Heart left ventricle (tissue), 16 donors: ENCODE measurements at regions of chr14 and their contacts with region 1.

Region 1: GRCh38 chr14:62126879-62127478 is 364.8 kb downstream of the SNAPC1 start:
- DNase-seq: no peak
- ATAC-seq: peak in 3 of 4 donors; percentile 47 to 69 (median 54)
- H3K4me3 ChIP-seq: no peak overlapping the region
- H3K27ac ChIP-seq: no peak overlapping the region
- H3K4me1 ChIP-seq: no peaks in the 10 kb centered on the region
- H3K27me3 ChIP-seq: peaks cover 0 to 82% (median 19%) of the 10 kb centered on the region in 9 donors
- CTCF ChIP-seq: peak; percentile 50 to 77 (median 70)
- POLR2A ChIP-seq: no peak

Region 2: GRCh38 chr14:61269321-61270083 is 857.5 kb before region 1 on chr14:
- intact Hi-C with region 1: loop called in 1 of 10 experiments (anchors 5 kb)
- DNase-seq: peak; percentile 45 to 77 (median 61)
- ATAC-seq: peak; percentile 48 to 88 (median 73)
- H3K4me3 ChIP-seq: peak overlapping the region in 10 of 12 donors; percentile 16 to 46 (median 34)
- H3K27ac ChIP-seq: no peak overlapping the region
- H3K4me1 ChIP-seq: peaks cover 0 to 8% (median 0%) of the 10 kb centered on the region in 12 donors
- H3K27me3 ChIP-seq: peaks cover 0 to 37% (median 5%) of the 10 kb centered on the region in 9 donors
- CTCF ChIP-seq: peak; percentile 63 to 81 (median 76)
- POLR2A ChIP-seq: no peak

Region 3: GRCh38 chr14:61296719-61297502 is 830.1 kb before region 1 on chr14:
- intact Hi-C with region 1: loop called in 5 of 10 experiments (anchors 10 kb)
- DNase-seq: no peak
- ATAC-seq: peak in 1 of 4 donors; percentile 57
- H3K4me3 ChIP-seq: no peak overlapping the region
- H3K27ac ChIP-seq: no peak overlapping the region
- H3K4me1 ChIP-seq: peaks cover 0 to 19% (median 0%) of the 10 kb centered on the region in 12 donors
- H3K27me3 ChIP-seq: no peaks in the 10 kb centered on the region
- CTCF ChIP-seq: peak; percentile 51 to 77 (median 68)
- POLR2A ChIP-seq: no peak

Region 4: GRCh38 chr14:61456720-61457119 is 670.3 kb before region 1 on chr14:
- intact Hi-C with region 1: loop called in 8 of 10 experiments (anchors 5 to 10 kb)
- DNase-seq: peak in 4 of 5 donors; percentile 81 to 90 (median 85)
- ATAC-seq: peak in 3 of 4 donors; percentile 76 to 83 (median 78)
- H3K4me3 ChIP-seq: no peak overlapping the region
- H3K27ac ChIP-seq: no peak overlapping the region
- H3K4me1 ChIP-seq: peaks cover 0 to 38% (median 13%) of the 10 kb centered on the region in 12 donors
- H3K27me3 ChIP-seq: no peaks in the 10 kb centered on the region
- CTCF ChIP-seq: peak; percentile 78 to 94 (median 88)
- POLR2A ChIP-seq: no peak

Region 5: DNA sequence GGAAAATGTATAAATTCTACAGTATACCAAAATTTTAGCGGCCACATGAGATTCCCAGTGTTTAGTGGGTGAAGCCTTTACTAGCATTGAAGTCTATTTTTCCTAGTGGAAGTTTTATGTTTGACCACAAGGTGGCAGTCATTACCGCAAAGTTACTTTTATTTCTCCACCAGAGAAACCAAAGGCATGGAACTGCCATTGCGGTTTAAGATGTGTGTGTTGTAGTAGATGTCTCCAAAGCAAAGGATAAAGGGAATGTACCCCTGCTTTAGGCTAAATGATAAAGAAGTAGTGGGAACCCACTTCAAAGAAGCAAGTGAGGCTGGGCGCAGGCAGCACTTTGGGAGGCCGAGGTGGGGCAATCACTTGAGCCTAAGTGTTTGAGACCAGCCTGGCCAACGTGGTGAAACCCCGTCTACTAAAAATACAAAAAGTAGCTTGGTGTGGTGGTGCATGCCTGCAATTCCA is 665.1 kb before region 1 on chr14:
- intact Hi-C with region 1: loop called in 7 of 10 experiments (anchors 5 to 10 kb)
- DNase-seq: no peak
- ATAC-seq: peak; percentile 27 to 49 (median 38)
- H3K4me3 ChIP-seq: no peak overlapping the region
- H3K27ac ChIP-seq: peak overlapping the region in 4 of 12 donors; percentile 32 to 65 (median 40)
- H3K4me1 ChIP-seq: peaks cover 0 to 36% (median 27%) of the 10 kb centered on the region in 12 donors
- H3K27me3 ChIP-seq: no peaks in the 10 kb centered on the region
- CTCF ChIP-seq: peak; percentile 65 to 90 (median 81)
- POLR2A ChIP-seq: no peak

Region 6: DNA sequence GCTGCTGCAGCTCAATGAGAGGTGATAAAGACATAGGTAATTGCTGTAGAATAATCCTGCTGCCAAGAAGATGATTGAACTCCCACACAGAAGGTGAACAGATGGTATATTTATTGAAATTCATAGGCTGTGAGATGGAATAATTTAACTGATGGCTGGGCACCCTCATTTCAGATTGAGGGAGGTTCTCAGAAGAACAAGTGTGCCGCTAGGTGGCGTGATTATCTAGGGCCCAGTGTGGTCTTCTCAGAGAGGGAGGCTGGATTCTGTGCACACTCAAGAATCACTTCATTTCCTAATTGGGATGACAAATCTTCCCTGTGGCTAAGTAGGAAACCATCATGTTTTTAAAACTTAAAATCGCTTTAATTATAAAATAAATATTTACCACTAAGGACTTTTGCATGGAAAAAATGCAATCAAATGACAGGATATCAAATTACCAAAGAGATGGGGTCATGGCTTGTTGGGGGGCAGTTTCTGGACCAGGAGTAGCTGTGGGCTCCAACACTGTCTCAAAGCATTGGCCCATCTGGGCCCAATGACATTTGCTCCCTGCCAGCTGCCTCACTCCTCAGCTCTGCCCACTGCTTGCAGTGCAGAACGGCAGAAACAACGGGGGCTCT is 232.4 kb before region 1 on chr14:
- intact Hi-C with region 1: loop called (anchors 1 to 10 kb)
- DNase-seq: peak in 4 of 5 donors; percentile 27 to 57 (median 40)
- ATAC-seq: no peak
- H3K4me3 ChIP-seq: no peak overlapping the region
- H3K27ac ChIP-seq: no peak overlapping the region
- H3K4me1 ChIP-seq: peaks cover 0 to 10% (median 0%) of the 10 kb centered on the region in 12 donors
- H3K27me3 ChIP-seq: peaks cover 0 to 13% (median 0%) of the 10 kb centered on the region in 9 donors
- CTCF ChIP-seq: peak; percentile 28 to 62 (median 54)
- POLR2A ChIP-seq: no peak